BJ (cell line): ENCODE measurements at regions of chr19 and their contacts with region 1.

Region 1: DNA sequence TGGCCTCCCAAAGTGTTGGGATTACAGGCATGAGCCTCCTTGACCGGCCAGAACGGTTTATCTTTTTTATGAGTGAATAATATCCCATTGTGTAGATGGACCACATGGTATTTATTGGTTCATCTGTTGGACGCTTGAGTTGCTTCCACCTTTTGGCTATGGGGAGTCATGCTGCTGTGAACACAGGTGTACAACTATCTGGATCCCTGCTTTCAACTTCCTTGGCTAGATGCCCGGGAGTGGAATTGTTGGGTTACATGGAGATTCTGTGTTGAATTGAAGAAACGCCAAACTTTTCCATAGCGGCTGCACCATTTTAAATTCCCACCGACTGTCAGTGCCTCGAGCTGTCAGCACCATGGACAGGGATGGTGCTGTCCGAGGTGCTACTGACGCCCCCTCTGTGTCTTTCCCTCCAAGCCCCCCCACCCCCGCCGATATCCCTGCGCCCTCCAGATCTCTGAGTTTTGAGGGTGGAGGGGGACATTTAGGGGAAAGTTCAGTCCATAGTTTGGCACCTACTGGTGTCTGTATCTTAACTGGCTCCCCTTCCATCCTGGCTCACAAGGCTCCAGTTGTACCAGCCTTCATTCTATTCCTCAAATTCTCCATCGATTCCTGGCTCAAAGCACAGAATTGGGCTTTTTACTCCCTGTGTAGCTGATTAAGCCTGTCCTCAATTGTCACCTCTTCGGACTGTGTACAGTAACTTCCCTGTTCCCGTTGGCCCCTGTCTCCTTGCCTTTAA is 27.3 kb downstream of the PNPLA6 start:
- DNase-seq: no peak
- H3K4me3 ChIP-seq: no peak overlapping the region
- H3K27me3 ChIP-seq: no peaks in the 10 kb centered on the region
- CTCF ChIP-seq: no peak

Region 2: GRCh38 chr19:7152568-7152967 is 410.3 kb before region 1 on chr19:
- CTCF ChIA-PET with region 1: no interaction called
- POLR2A ChIA-PET with region 1: no interaction called
- DNase-seq: no peak
- H3K4me3 ChIP-seq: no peak overlapping the region
- H3K27me3 ChIP-seq: no peaks in the 10 kb centered on the region
- CTCF ChIP-seq: no peak

Region 3: DNA sequence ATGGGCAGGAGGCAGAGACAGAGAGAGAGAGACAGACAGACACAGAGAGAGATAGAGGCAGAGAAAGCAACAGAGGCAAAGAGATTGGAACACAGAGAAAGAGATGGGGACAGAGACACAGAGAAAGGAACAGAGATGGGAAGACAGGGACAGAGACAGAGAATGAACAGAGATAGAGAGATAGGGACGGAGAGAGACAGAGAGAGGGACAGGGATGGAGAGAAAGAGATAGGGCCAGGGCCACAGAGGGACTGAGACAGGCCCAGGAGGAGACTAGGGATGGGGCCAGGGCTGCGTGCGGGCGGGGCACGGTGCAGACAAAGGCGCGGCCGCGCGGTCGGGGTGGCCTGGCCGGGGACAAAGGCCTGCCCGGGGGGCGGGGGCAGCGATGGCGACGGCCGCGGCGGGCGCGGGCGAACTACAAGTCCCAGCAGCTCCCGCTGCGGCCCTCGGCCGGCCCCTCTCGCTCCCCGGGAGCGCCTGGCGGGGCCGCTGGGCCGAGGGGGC is 47.1 kb before region 1 on chr19 and contains the start of gene ZNF358:
- CTCF ChIA-PET with region 1: no interaction called
- POLR2A ChIA-PET with region 1: no interaction called
- DNase-seq: no peak
- H3K4me3 ChIP-seq: peak within 1 kb of the TSS; percentile 78
- H3K27me3 ChIP-seq: no peaks in the 10 kb centered on the region
- CTCF ChIP-seq: no peak
- polyA plus RNA-seq, gene ZNF358: 25.0 and 43.9 TPM in 2 replicates

Region 4: DNA sequence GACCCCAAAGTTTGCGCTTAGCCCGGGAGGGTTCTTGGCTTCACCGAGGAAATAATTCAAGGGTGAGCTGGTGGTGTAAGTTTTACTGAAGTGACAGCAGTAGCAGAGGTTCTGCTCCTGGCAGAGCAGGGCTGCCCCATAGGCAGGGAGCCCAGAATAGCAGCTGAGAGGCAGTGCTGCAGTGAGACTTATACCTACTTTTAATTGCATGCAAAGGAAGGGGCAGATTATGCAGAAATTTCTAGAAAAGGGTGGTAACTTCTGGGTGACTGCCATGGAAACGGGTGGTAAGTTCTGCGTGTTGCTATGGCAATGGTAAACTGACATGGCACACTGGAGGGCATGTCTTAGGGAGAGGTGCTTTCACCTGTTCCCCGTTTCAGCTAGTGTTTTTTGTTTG is 15.3 kb after region 1 on chr19:
- CTCF ChIA-PET with region 1: interaction called, 13 read pairs
- POLR2A ChIA-PET with region 1: no interaction called
- DNase-seq: no peak
- H3K4me3 ChIP-seq: no peak overlapping the region
- H3K27me3 ChIP-seq: no peaks in the 10 kb centered on the region
- CTCF ChIP-seq: no peak

Region 5: GRCh38 chr19:7607874-7608560 is 45.2 kb after region 1 on chr19:
- CTCF ChIA-PET with region 1: interaction called, 11 read pairs
- POLR2A ChIA-PET with region 1: no interaction called
- DNase-seq: no peak
- H3K4me3 ChIP-seq: no peak overlapping the region
- H3K27me3 ChIP-seq: no peaks in the 10 kb centered on the region
- CTCF ChIP-seq: no peak

Region 6: GRCh38 chr19:7734220-7735203 is 171.7 kb after region 1 on chr19:
- CTCF ChIA-PET with region 1: no interaction called
- POLR2A ChIA-PET with region 1: no interaction called
- DNase-seq: no peak
- H3K4me3 ChIP-seq: no peak overlapping the region
- H3K27me3 ChIP-seq: peaks cover 8% of the 10 kb centered on the region
- CTCF ChIP-seq: no peak